Dendritic cell treated with granulocyte-macrophage colony-stimulating factor and Interleukin-4, amounts not matched to agents 40 ng/mL and 50 ng/mL, for 4 days (primary cell): ENCODE measurements at regions of chr17 and their contacts with region 1.

Region 1: GRCh38 chr17:63809970-63810369 is 17.3 kb upstream of the PSMC5 start:
- H3K4me3 Mint-ChIP-seq: no peak overlapping the region
- H3K27ac Mint-ChIP-seq: no peak overlapping the region
- H3K4me1 Mint-ChIP-seq: no peaks in the 10 kb centered on the region
- H3K27me3 Mint-ChIP-seq: no peaks in the 10 kb centered on the region

Region 2: GRCh38 chr17:63659850-63660249 is 150.1 kb before region 1 on chr17:
- intact Hi-C with region 1: loop called (anchors 5 kb)
- H3K4me3 Mint-ChIP-seq: no peak overlapping the region
- H3K27ac Mint-ChIP-seq: no peak overlapping the region
- H3K4me1 Mint-ChIP-seq: peaks cover 32% of the 10 kb centered on the region
- H3K27me3 Mint-ChIP-seq: no peaks in the 10 kb centered on the region